ENCODE measurements at regions of chr2 and their contacts with region 1.

Region 1: GRCh38 chr2:216698895-216699294 is 3.5 kb upstream of the IGFBP5 start:
- DNase-seq: no peak
- ATAC-seq: peak; percentile 47 to 52
- H3K4me3 ChIP-seq: no peak overlapping the region
- H3K27ac ChIP-seq: no peak overlapping the region
- H3K4me1 ChIP-seq: peaks cover 3% of the 10 kb centered on the region
- H3K27me3 ChIP-seq: no peaks in the 10 kb centered on the region

Region 2: DNA sequence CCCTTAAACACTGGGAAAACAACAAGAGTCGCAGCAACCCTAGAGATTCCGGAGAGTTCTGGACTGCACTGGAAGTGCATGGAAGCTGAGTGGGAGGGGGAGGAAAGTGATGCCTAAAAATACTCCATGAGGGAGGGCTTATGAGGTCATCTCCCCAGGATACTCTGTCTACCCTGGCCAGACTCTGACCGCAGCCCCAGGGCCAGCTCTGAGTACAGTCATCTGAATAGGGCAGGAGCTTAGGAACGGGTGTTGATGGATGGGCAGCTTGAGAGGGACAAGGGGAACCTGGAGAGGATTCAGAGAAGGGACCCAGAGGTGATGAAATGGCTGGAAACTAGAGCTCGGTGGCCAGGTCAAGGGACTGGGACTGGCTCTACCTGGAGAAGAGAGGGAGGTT is 75.7 kb after region 1 on chr2:
- intact Hi-C with region 1: loop called in 2 of 4 experiments (anchors 5 to 10 kb)
- DNase-seq: peak; percentile 81 to 88 (median 85)
- ATAC-seq: peak; percentile 95 to 96
- H3K4me3 ChIP-seq: no peak overlapping the region
- H3K27ac ChIP-seq: peak overlapping the region; percentile 92
- H3K4me1 ChIP-seq: peaks cover 8% of the 10 kb centered on the region
- H3K27me3 ChIP-seq: no peaks in the 10 kb centered on the region

Region 3: DNA sequence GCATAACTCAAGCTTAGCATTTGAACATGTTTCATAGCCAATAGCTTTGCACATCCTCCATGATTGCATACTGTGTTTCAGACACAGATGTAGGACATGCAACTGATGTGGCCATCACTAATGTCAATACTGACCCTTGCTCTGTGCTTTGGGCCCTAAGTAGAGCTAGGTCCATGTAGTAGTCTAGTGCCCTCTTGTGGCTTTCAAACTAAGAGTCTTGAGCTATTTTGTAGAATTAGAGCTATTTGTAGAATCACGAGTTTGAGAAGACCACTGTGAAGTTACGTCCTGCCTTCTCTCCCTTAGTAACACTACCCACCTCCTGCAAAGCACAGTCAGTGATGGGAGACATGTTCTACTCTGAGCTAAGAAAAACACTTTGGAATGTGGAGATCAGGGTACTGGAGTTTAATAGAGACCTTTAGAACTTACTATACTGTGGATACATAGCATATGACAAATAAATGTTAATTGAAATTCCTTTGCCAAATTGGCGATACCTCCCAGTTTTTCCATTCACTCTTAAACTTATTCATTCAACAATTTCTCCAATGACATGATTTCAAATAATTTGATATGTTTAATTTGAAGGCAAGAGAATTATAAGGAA is 467.5 kb after region 1 on chr2:
- intact Hi-C with region 1: loop called (anchors 5 to 10 kb)
- DNase-seq: no peak
- ATAC-seq: peak; percentile 72 to 79
- H3K4me3 ChIP-seq: no peak overlapping the region
- H3K27ac ChIP-seq: no peak overlapping the region
- H3K4me1 ChIP-seq: peaks cover 1% of the 10 kb centered on the region
- H3K27me3 ChIP-seq: no peaks in the 10 kb centered on the region

Region 4: DNA sequence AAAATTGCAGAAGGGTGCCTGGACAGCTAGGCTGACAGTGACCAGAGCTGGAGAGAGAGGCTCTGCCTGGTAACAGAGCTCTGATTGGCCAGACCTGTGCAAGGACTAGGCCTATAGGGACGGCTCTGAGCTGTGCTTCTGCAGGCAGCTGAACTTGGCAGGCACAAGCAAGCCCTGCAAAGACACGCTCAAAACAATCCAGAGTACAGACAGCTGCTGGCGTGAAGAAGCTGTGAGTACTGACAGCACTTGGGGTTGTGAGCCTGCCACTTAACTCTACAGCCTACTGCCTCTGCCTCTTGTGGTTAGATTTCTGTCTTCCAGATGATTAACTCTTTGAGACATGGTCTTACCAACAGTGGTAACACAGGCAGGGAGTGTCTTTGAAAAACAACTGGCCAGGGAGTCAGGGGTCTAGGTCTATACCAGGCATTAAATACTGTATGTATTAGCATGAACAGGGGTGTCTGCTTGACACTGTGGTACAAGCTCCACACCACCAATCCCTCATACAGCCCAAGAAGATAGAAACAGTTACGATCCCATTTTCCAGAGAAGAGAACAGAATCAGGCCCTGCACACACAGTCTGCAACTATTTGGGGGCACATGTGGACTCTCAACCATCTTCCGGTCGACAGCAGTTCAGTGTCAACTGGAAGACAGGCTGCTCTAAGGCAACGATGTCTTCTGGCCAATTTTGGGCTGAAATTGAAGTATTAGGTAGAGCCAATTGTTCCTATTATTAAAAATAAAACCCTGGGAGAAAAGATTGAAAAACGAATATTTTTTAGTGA is 735.5 kb after region 1 on chr2:
- intact Hi-C with region 1: loop called in 1 of 4 experiments (anchors 10 kb)
- DNase-seq: peak; percentile 90 to 92 (median 92)
- ATAC-seq: peak; percentile 99
- H3K4me3 ChIP-seq: no peak overlapping the region
- H3K27ac ChIP-seq: peak overlapping the region; percentile 72
- H3K4me1 ChIP-seq: peaks cover 19% of the 10 kb centered on the region
- H3K27me3 ChIP-seq: no peaks in the 10 kb centered on the region

Region 5: GRCh38 chr2:217713395-217714286 is 1014.7 kb after region 1 on chr2:
- intact Hi-C with region 1: loop called in 2 of 4 experiments (anchors 5 to 10 kb)
- DNase-seq: peak; percentile 74 to 90 (median 90)
- ATAC-seq: peak; percentile 76 to 80
- H3K4me3 ChIP-seq: no peak overlapping the region
- H3K27ac ChIP-seq: peak overlapping the region; percentile 2
- H3K4me1 ChIP-seq: peaks cover 7% of the 10 kb centered on the region
- H3K27me3 ChIP-seq: no peaks in the 10 kb centered on the region

Measured in right cardiac atrium (tissue), 5 donors.